ENCODE measurements at regions of chr7 and their contacts with region 1.

Region 1: GRCh38 chr7:106153891-106154449 is 41.9 kb upstream of the SYPL1 start:
- DNase-seq: peak; percentile 64
- ATAC-seq: peak; percentile 89
- H3K4me3 Mint-ChIP-seq: peak overlapping the region; percentile 72
- H3K27ac Mint-ChIP-seq: peak overlapping the region; percentile 19
- H3K4me1 Mint-ChIP-seq: peaks cover 52% of the 10 kb centered on the region
- H3K27me3 Mint-ChIP-seq: no peaks in the 10 kb centered on the region
- CTCF ChIP-seq: peak; percentile 66

Region 2: DNA sequence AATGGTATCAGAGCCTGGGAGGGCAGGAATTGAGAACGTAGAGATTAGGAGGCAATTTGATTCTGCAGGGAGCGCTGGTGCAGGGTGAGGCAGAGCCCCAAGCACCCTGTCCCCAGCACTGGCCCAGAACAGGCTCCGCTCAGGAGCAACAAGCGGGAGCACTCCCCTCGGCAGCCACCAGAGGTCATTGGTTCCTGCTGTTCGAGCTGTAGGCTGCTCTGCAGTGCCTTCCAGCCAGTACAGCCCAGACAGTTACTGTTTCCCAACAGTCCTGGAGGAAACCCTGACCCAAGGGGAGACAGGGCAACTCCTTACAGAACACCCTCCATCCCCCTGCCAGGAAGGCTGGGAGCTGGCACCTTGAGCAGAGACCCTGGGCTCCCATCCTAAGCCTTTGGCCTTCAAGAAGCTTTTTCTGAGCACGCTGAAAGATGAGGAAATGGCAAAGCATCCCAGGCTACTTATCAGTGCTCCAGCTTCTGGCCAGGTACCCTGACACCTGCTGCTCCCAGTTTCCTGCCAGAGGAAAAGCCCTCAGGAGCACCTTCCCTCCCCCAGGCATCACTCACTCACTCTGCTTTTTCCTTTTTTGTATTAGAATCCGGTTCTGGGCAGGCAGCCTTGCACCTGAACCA is 501.5 kb before region 1 on chr7:
- CTCF ChIA-PET with region 1: interaction called, 6 read pairs
- POLR2A ChIA-PET with region 1: no interaction called
- intact Hi-C with region 1: loop called (anchors 5 kb)
- DNase-seq: peak; percentile 45
- ATAC-seq: peak; percentile 94
- H3K4me3 Mint-ChIP-seq: no peak overlapping the region
- H3K27ac Mint-ChIP-seq: no peak overlapping the region
- H3K4me1 Mint-ChIP-seq: peaks cover 2% of the 10 kb centered on the region
- H3K27me3 Mint-ChIP-seq: no peaks in the 10 kb centered on the region
- CTCF ChIP-seq: no peak

Region 3: DNA sequence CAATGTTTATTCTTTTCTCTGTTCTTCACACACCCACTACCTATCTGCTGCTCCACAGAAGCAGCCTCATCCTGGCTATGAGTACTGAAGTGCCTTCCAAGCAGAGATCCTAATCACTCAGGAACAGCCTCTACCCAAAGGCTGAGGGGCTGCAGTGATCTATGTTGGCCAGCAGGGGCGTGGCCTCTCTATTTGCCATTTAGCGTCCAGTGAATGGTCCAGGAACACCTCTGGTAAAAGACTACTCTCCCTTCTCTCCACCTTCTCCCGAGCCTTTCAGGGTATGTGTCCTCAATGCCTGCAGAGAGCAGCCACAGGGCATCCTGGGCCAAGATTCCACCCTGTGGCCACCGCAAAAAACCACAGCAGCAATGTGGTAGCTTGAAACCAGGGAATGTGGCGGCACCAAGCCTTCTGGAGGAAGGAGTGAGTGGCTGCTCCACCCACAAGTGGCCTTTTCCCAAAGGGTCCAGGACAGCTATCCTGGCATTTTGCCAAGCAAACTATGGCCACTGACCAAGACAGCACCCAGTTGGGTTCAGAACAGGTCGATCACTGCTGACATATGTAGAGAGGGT is 112.7 kb before region 1 on chr7:
- CTCF ChIA-PET with region 1: interaction called, 33 read pairs
- POLR2A ChIA-PET with region 1: interaction called, 5 read pairs
- intact Hi-C with region 1: no loop called
- DNase-seq: no peak
- ATAC-seq: peak; percentile 66
- H3K4me3 Mint-ChIP-seq: no peak overlapping the region
- H3K27ac Mint-ChIP-seq: no peak overlapping the region
- H3K4me1 Mint-ChIP-seq: peaks cover 19% of the 10 kb centered on the region
- H3K27me3 Mint-ChIP-seq: no peaks in the 10 kb centered on the region
- CTCF ChIP-seq: peak; percentile 53

Region 4: GRCh38 chr7:106071356-106071998 is 82.5 kb before region 1 on chr7:
- CTCF ChIA-PET with region 1: interaction called, 19 read pairs
- POLR2A ChIA-PET with region 1: interaction called, 6 read pairs
- intact Hi-C with region 1: no loop called
- DNase-seq: peak; percentile 57
- ATAC-seq: peak; percentile 87
- H3K4me3 Mint-ChIP-seq: peak overlapping the region; percentile 73
- H3K27ac Mint-ChIP-seq: peak overlapping the region; percentile 98
- H3K4me1 Mint-ChIP-seq: peaks cover 100% of the 10 kb centered on the region
- H3K27me3 Mint-ChIP-seq: no peaks in the 10 kb centered on the region
- CTCF ChIP-seq: no peak

Region 5: DNA sequence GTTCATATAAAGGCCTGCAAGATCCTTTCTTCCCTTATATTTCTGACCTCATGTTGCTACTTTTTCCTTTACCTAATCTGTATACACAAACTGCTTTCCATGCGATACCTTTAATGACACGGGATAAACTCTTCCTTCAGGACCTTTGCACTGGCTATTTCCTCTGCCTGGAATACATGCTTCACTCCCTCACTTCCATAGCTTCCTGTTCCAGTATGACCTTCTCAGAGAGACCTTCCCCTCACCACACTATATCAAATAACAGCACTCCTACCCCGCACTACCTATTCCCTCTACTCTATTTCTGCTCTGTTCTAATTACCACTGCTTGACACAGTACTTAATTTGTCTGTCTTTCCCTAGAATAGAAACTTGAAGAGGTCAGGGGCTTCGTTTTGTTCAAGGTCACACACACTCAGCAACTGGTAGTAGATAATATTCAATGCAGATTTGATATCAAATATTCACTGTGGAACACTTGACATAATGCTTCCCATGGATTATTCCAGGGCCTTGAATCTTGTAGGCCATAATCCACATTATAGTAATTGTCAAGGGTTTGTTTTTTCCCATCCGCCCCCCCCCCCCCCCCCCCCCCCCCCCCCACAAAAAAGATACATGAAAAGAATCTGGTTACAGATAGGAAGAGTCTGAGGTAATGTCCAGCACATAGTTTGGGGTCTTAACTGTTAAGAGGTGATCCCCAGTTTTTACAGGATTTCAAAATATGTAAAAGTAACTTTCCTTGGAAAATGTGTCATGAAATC is 52.9 kb before region 1 on chr7:
- CTCF ChIA-PET with region 1: interaction called, 10 read pairs
- POLR2A ChIA-PET with region 1: interaction called, 6 read pairs
- intact Hi-C with region 1: no loop called
- DNase-seq: no peak
- ATAC-seq: no peak
- H3K4me3 Mint-ChIP-seq: peak overlapping the region; percentile 2
- H3K27ac Mint-ChIP-seq: peak overlapping the region; percentile 83
- H3K4me1 Mint-ChIP-seq: peaks cover 82% of the 10 kb centered on the region
- H3K27me3 Mint-ChIP-seq: no peaks in the 10 kb centered on the region
- CTCF ChIP-seq: no peak

Region 6: GRCh38 chr7:106166655-106167342 is 12.8 kb after region 1 on chr7:
- CTCF ChIA-PET with region 1: interaction called, 61 read pairs
- POLR2A ChIA-PET with region 1: interaction called, 9 read pairs
- intact Hi-C with region 1: loop called (anchors 1 kb)
- DNase-seq: no peak
- ATAC-seq: peak; percentile 54
- H3K4me3 Mint-ChIP-seq: no peak overlapping the region
- H3K27ac Mint-ChIP-seq: no peak overlapping the region
- H3K4me1 Mint-ChIP-seq: peaks cover 10% of the 10 kb centered on the region
- H3K27me3 Mint-ChIP-seq: peaks cover 2% of the 10 kb centered on the region
- CTCF ChIP-seq: peak; percentile 77

Measured in activated B cell treated with CpG ODN at 0.5 μM for 24 hours (primary cell).